Activated T-helper 1 cell treated with anti-CD3 and anti-CD28 coated beads, Interleukin-12 subunit alpha, Interleukin-12 subunit beta, Interleukin-2, Interleukin-4 antibody, amounts not matched to agents 30 ng/mL and 10 ng/mL and 1 ng/mL, durations not matched to agents 14 hours and 24 hours and 36 hours (primary cell): ENCODE measurements at regions of chr12 and their contacts with region 1.

Region 1: DNA sequence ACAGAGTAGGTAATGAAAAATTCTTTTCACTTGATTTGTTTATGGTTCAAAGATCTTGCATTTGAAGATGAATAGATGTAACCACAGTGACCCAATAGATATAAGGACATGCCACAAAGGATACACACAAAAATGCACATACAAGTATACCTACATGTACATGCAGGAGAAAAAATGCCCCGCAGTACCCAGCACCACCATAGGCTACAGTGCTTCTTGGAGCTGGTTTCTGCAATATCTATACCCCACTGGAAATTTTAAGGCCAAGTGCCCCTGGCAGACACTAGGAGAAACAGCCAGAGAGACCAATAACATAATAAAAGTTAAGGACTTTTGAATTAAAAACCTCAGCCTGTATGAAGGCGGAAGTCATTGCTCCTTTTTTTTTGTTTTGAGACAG is 12.1 kb upstream of the STAC3 start:
- DNase-seq: no peak
- H3K4me3 Mint-ChIP-seq: no peak overlapping the region
- H3K27ac Mint-ChIP-seq: no peak overlapping the region
- H3K4me1 Mint-ChIP-seq: peaks cover 7% of the 10 kb centered on the region
- H3K27me3 Mint-ChIP-seq: no peaks in the 10 kb centered on the region

Region 2: DNA sequence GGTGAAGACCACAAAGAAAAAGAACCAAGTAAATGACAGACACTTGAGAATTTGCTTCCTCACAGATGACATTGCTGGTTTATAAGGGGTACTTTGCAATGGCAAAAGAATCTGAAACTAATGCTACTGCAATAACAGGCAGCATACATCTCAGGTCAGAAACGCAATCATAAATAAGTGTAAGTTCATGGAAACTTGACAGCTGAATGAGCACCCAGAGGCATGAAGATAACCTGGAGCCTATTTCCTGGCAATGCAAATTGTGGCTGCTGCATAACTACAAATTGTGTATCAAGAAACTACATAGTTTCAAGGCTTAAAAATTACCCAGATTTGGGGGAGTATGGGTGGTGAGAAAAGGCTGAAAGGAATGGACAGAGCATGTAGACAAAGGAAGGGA is 204.6 kb before region 1 on chr12:
- intact Hi-C with region 1: no loop called
- DNase-seq: no peak
- H3K4me3 Mint-ChIP-seq: no peak overlapping the region
- H3K27ac Mint-ChIP-seq: peak overlapping the region; percentile 20
- H3K4me1 Mint-ChIP-seq: peaks cover 25% of the 10 kb centered on the region
- H3K27me3 Mint-ChIP-seq: no peaks in the 10 kb centered on the region

Region 3: DNA sequence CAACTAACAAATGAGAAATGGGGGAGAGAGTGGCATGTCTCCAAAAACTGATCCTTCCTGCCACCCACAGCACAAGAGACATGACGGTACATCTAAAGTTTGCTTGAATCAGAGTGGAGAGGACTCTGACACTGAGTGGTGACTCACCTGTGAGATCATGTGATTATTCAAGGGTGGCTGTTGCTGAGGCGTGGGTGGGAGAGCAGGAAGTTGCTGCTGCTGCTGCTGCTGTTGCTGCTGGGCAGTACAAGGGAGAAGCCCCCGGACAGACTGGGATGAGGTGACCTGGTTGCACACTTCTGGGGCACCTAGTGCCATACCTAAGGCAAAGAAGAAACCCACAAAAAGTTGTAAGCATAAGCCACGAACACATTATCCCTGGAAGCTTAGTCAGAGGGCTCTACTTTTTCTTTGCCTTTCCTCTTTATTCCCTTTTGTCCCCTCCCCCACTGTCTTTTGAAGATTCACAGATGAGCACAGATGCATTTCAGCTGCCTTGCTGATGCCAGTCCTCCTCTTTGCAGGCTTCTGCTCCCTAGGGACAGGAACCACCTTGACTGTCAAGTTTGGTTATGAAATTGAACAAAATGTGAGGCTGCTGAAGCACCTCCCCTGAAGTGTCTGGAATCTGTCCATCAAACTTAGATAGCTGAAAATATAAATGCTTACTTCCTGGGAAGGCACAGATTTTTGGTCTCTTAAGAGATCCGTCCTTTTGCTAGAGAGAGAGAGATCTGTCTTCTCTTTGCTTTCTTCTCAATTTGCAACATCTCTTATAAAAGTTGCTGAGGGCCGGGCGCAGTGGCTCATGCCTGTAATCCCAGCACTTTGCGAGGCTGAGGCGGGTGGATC is 17.3 kb after region 1 on chr12:
- intact Hi-C with region 1: loop called (anchors 1 kb)
- DNase-seq: peak; percentile 69
- H3K4me3 Mint-ChIP-seq: peak overlapping the region; percentile 50
- H3K27ac Mint-ChIP-seq: peak overlapping the region; percentile 92
- H3K4me1 Mint-ChIP-seq: peaks cover 15% of the 10 kb centered on the region
- H3K27me3 Mint-ChIP-seq: no peaks in the 10 kb centered on the region